GM12878 (cell line): ENCODE measurements at regions of chr12 and their contacts with region 1.

Region 1: DNA sequence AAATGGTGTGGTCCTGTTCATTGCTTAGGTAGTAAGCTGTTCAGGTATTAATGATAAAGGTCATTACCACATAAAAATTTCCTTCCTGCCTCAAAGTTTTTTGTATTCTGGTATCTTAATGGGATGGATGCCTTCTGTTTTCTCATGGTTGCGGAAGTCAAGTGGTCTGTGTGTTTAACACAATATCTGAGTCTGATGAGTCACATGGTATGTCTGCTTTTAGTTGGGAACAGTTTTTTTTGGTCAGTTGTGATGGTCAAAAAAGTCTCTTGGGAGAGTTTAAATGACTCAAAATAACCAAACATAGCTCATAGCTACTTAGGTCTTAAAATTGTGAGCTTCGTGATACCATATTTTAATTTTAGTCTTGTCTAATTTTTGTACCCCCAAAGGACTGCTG is 40.7 kb downstream of the STK38L start:
- DNase-seq: peak; percentile 89
- ATAC-seq: peak; percentile 67
- H3K4me3 ChIP-seq: no peak overlapping the region
- H3K27ac ChIP-seq: peak overlapping the region; percentile 70; the same call in 1 of the 2 replicates
- H3K4me1 ChIP-seq: peaks cover 28% of the 10 kb centered on the region
- H3K27me3 ChIP-seq: no peaks in the 10 kb centered on the region
- CTCF ChIP-seq: no peak
- EP300 ChIP-seq: peak; percentile 69 to 77; a peak in 3 of 4 replicates
- POLR2A ChIP-seq: no peak
- RAD21 ChIP-seq: no peak

Region 2: DNA sequence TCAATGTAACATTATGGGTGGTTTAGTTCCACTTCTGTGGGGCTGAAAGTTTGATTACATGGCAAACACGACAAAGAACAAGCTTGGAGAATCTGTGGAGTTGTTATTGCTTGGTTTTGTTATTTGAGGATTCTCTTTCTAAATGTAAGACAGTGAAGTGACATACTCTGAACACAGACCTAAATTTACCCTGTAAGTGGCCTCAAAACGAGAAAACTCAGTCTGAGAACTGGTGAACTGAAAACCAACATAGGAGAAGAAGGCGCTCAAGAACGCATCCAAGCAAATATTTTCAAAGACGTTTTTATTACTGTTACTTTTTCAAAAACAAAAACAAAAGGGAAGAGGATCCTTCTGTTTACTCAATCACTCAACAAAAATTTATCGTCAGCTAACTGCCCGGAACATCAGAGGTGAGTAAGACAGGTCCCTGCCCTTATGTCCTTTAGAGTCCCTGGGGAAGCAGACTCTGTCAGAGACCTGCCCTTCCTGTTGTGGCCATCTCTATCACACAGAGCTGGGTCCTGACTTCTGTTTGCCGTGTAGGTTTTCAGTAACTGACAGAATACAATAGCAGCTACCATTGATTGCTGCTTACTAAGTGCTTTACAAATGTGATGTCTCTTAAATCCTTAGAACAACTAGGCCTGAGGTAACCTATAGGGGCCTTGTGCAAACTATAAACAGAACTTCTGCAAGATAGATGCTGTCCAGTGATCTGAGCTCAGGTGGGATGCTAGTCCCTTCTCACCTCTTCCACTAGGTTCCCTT is 123.1 kb before region 1 on chr12:
- CTCF ChIA-PET with region 1: interaction called, 3 read pairs
- POLR2A ChIA-PET with region 1: interaction called, 5 read pairs
- RAD21 ChIA-PET with region 1: interaction called, 10 read pairs
- SMC1A ChIA-PET with region 1: interaction called, 5 read pairs
- in situ Hi-C with region 1: no loop called
- intact Hi-C with region 1: no loop called
- DNase-seq: peak; percentile 62
- ATAC-seq: peak; percentile 93
- H3K4me3 ChIP-seq: peak overlapping the region; percentile 15; the same call in 1 of the 2 replicates
- H3K27ac ChIP-seq: peak overlapping the region; percentile 64
- H3K4me1 ChIP-seq: peaks cover 3% of the 10 kb centered on the region; the same call in 1 of the 2 replicates
- H3K27me3 ChIP-seq: no peaks in the 10 kb centered on the region
- CTCF ChIP-seq: no peak
- EP300 ChIP-seq: no peak
- POLR2A ChIP-seq: no peak
- RAD21 ChIP-seq: no peak

Region 3: GRCh38 chr12:27237790-27238771 is 46.7 kb before region 1 on chr12:
- CTCF ChIA-PET with region 1: interaction called, 3 read pairs
- POLR2A ChIA-PET with region 1: interaction called, 23 read pairs
- RAD21 ChIA-PET with region 1: interaction called, 33 read pairs
- SMC1A ChIA-PET with region 1: interaction called, 491 read pairs
- in situ Hi-C with region 1: no loop called
- intact Hi-C with region 1: no loop called
- DNase-seq: peak; percentile 72
- ATAC-seq: peak; percentile 82
- H3K4me3 ChIP-seq: peak overlapping the region; percentile 31
- H3K27ac ChIP-seq: peak overlapping the region; percentile 82
- H3K4me1 ChIP-seq: peaks cover 32% of the 10 kb centered on the region
- H3K27me3 ChIP-seq: no peaks in the 10 kb centered on the region
- CTCF ChIP-seq: no peak
- EP300 ChIP-seq: peak in 1 of 2 experiments; percentile 40; a peak in 1 of 4 replicates
- POLR2A ChIP-seq: no peak
- RAD21 ChIP-seq: peak; percentile 7; the same call in 1 of the 2 replicates

Region 4: GRCh38 chr12:27252934-27253333 is 31.8 kb before region 1 on chr12:
- CTCF ChIA-PET with region 1: interaction called, 19 read pairs
- POLR2A ChIA-PET with region 1: interaction called, 94 read pairs
- RAD21 ChIA-PET with region 1: interaction called, 53 read pairs
- SMC1A ChIA-PET with region 1: interaction called, 491 read pairs
- in situ Hi-C with region 1: no loop called
- intact Hi-C with region 1: no loop called
- DNase-seq: no peak
- ATAC-seq: peak; percentile 56
- H3K4me3 ChIP-seq: no peak overlapping the region; the same call in 1 of the 2 replicates
- H3K27ac ChIP-seq: peak overlapping the region; percentile 48; the same call in 1 of the 2 replicates
- H3K4me1 ChIP-seq: 0 out of 2 replicates have a peak, but pooled peaks cover 5% of the 10 kb centered on the region
- H3K27me3 ChIP-seq: no peaks in the 10 kb centered on the region
- CTCF ChIP-seq: no peak
- EP300 ChIP-seq: no peak
- POLR2A ChIP-seq: no peak
- RAD21 ChIP-seq: no peak

Region 5: GRCh38 chr12:27260746-27261145 is 24.0 kb before region 1 on chr12:
- CTCF ChIA-PET with region 1: interaction called, 8 read pairs
- POLR2A ChIA-PET with region 1: interaction called, 94 read pairs
- RAD21 ChIA-PET with region 1: interaction called, 53 read pairs
- SMC1A ChIA-PET with region 1: interaction called, 491 read pairs
- in situ Hi-C with region 1: no loop called
- intact Hi-C with region 1: no loop called
- DNase-seq: no peak
- ATAC-seq: peak; percentile 18
- H3K4me3 ChIP-seq: peak overlapping the region; percentile 29; the same call in 1 of the 2 replicates
- H3K27ac ChIP-seq: peak overlapping the region; percentile 39
- H3K4me1 ChIP-seq: peaks cover 20% of the 10 kb centered on the region
- H3K27me3 ChIP-seq: no peaks in the 10 kb centered on the region
- CTCF ChIP-seq: no peak
- EP300 ChIP-seq: no peak
- POLR2A ChIP-seq: no peak
- RAD21 ChIP-seq: no peak

Region 6: DNA sequence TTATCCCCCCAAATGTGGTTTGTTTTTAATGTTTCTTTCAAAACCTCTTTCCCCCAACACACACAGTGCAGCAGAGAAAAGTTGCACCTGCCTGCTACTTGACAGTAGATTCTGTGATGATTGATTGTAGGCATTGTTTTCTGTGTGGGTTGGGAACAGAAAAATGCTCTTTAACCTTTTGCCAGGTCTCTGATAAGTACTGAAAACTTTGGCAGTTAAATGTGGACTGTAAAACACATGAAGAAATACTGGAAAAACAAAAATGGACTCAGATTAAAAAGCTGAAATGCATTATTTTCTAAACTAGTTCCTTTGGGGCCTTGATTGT is 12.1 kb before region 1 on chr12:
- CTCF ChIA-PET with region 1: interaction called, 10 read pairs
- POLR2A ChIA-PET with region 1: interaction called, 26 read pairs
- RAD21 ChIA-PET with region 1: interaction called, 24 read pairs
- SMC1A ChIA-PET with region 1: interaction called, 77 read pairs
- in situ Hi-C with region 1: no loop called
- intact Hi-C with region 1: no loop called
- DNase-seq: no peak
- ATAC-seq: peak; percentile 69
- H3K4me3 ChIP-seq: no peak overlapping the region
- H3K27ac ChIP-seq: no peak overlapping the region
- H3K4me1 ChIP-seq: peaks cover 16% of the 10 kb centered on the region
- H3K27me3 ChIP-seq: no peaks in the 10 kb centered on the region
- CTCF ChIP-seq: no peak
- EP300 ChIP-seq: peak in 1 of 2 experiments; percentile 34; a peak in 1 of 4 replicates
- POLR2A ChIP-seq: no peak
- RAD21 ChIP-seq: no peak

Region 7: GRCh38 chr12:27332407-27333301 is 47.9 kb after region 1 on chr12 and contains the start of gene BMAL2:
- CTCF ChIA-PET with region 1: no interaction called
- POLR2A ChIA-PET with region 1: interaction called, 4 read pairs
- RAD21 ChIA-PET with region 1: interaction called, 11 read pairs
- SMC1A ChIA-PET with region 1: interaction called, 7 read pairs
- in situ Hi-C with region 1: no loop called
- intact Hi-C with region 1: no loop called
- DNase-seq: no peak
- ATAC-seq: peak; percentile 49
- H3K4me3 ChIP-seq: peak within 1 kb of the TSS; percentile 85
- H3K27ac ChIP-seq: peak within 1 kb of the TSS; percentile 89
- H3K4me1 ChIP-seq: peaks cover 42% of the 10 kb centered on the region
- H3K27me3 ChIP-seq: no peaks in the 10 kb centered on the region
- CTCF ChIP-seq: no peak
- EP300 ChIP-seq: no peak
- POLR2A ChIP-seq: peak; percentile 87
- RAD21 ChIP-seq: no peak
- polyA plus RNA-seq, gene BMAL2: 7.9 to 13.1 TPM